Activated T-helper 2 cell treated with anti-CD3 and anti-CD28 coated beads, Interferon-gamma antibody, Interleukin-2, Interleukin-4, amounts not matched to agents 10 μg/mL and 5 μg/mL and 100 μg/mL, durations not matched to agents 14 hours and 24 hours and 36 hours (primary cell): ENCODE measurements at regions of chr22 and their contacts with region 1.

Region 1: DNA sequence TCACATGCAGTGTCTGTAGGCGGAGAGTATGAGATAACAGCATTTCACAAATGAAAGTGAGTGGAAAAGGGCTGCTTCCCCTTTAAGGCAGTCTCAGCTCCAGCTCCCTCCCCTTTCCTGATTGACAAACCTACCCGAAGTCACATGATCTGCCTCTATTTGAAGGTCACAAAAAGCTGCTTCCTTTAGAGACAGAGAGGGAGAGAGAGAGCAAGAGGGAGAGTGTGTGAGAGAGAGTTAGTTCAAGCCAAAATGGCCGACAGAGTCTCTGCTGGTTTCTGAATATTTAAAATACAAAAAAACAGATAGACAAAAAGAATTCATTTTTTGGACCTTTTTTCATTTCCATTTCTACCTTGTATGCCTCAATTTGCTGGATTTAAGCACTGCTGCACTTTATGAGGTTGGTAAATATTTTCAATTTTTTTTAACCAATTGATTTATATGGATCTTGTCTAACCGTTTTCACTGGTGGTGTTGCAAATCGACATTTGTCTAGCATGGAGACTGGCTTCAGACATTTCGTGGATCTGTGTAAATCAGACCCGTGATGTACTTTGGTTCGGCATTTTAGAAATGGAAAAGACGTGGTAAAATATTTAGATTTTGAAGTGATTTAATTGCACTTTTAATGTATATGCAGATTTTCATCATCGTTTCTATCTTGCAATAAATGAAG is at the start of gene TNRC6B:
- DNase-seq: peak; percentile 79
- H3K4me3 Mint-ChIP-seq: peak within 1 kb of the TSS; percentile 88
- H3K27ac Mint-ChIP-seq: peak within 1 kb of the TSS; percentile 89
- H3K4me1 Mint-ChIP-seq: peaks cover 52% of the 10 kb centered on the region
- H3K27me3 Mint-ChIP-seq: no peaks in the 10 kb centered on the region
- total RNA-seq, gene TNRC6B: 28.0 and 34.1 TPM in 2 replicates

Region 2: DNA sequence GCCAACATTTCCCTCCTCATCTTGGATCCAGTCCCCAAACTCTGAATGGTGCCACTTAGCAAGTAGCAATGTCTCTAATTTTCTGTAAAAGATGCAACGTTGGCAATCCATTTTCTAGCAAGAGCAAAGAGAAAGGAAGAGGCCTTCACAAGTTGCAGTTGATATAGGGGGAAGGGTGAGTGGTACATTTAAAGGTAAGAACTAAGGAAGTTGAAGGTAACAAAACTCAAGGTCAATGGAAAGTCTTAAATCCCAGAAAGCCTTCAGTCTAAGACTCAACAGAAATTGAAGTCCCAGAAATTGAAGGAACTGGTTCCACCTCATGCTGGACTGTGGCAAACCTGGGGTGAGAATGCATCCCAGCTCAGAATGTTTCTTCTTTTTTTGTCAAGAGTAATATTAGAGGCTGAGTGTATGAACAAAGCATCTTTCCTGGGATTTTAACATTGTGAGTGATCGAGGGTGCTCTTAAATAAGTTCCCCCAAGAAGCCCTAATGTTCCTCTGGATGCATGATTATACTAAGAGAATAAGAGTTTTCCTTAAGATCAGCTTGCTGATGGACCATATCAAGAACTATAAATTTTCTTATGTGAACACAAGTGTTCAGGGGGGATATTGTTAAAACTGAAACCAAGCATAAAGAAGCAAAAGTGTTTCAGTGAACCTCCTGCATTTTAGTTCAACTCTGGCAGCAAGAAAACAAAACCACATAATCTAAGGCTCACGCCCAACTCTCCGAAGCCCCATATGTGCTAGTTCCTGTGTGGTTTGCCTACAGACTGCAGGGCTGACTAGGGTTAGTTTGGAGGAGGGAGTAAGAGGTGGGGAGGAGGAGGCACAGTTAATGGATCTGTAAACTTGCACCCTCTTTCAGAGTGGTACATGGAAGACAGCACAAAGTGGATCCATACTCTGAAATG is 277.3 kb before region 1 on chr22 and contains the start of gene GRAP2:
- intact Hi-C with region 1: loop called (anchors 10 kb)
- DNase-seq: peak; percentile 78
- H3K4me3 Mint-ChIP-seq: peak within 1 kb of the TSS; percentile 98
- H3K27ac Mint-ChIP-seq: peak within 1 kb of the TSS; percentile 99
- H3K4me1 Mint-ChIP-seq: peaks cover 31% of the 10 kb centered on the region
- H3K27me3 Mint-ChIP-seq: no peaks in the 10 kb centered on the region
- total RNA-seq, gene GRAP2: 44.1 and 46.5 TPM in 2 replicates

Region 3: GRCh38 chr22:40055143-40055883 is 122.6 kb before region 1 on chr22:
- intact Hi-C with region 1: loop called (anchors 2 kb)
- DNase-seq: no peak
- H3K4me3 Mint-ChIP-seq: peak overlapping the region; percentile 68
- H3K27ac Mint-ChIP-seq: peak overlapping the region; percentile 92
- H3K4me1 Mint-ChIP-seq: peaks cover 65% of the 10 kb centered on the region
- H3K27me3 Mint-ChIP-seq: no peaks in the 10 kb centered on the region

Region 4: GRCh38 chr22:40196628-40197360 is 18.9 kb after region 1 on chr22:
- intact Hi-C with region 1: loop called (anchors 1 kb)
- DNase-seq: no peak
- H3K4me3 Mint-ChIP-seq: no peak overlapping the region
- H3K27ac Mint-ChIP-seq: peak overlapping the region; percentile 78
- H3K4me1 Mint-ChIP-seq: peaks cover 38% of the 10 kb centered on the region
- H3K27me3 Mint-ChIP-seq: no peaks in the 10 kb centered on the region

Region 5: DNA sequence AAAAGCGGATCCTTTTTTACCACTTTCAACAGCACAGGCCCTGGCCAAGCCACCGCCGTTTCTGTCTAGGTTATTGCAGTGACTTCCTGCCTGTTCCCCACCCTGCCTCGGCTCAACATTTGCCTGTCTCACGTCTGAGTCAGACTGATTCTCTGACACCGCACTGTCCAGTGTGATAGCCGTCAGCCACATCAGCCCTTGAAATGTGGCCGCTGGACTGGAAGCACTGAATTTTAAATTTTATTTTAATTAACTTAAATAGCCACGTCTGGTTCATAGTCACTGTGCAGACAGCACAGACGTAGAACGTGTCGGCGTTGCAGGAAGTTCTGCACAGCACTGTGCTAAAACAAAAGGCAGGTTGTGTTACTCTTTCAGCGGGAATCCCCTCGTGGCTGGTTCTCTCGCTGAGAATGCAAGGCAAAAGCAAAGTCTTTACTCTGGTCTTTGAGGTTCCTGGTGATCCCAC is 112.1 kb after region 1 on chr22:
- intact Hi-C with region 1: loop called (anchors 1 kb)
- DNase-seq: peak; percentile 60
- H3K4me3 Mint-ChIP-seq: peak overlapping the region; percentile 63
- H3K27ac Mint-ChIP-seq: peak overlapping the region; percentile 94
- H3K4me1 Mint-ChIP-seq: peaks cover 49% of the 10 kb centered on the region
- H3K27me3 Mint-ChIP-seq: no peaks in the 10 kb centered on the region

Region 6: DNA sequence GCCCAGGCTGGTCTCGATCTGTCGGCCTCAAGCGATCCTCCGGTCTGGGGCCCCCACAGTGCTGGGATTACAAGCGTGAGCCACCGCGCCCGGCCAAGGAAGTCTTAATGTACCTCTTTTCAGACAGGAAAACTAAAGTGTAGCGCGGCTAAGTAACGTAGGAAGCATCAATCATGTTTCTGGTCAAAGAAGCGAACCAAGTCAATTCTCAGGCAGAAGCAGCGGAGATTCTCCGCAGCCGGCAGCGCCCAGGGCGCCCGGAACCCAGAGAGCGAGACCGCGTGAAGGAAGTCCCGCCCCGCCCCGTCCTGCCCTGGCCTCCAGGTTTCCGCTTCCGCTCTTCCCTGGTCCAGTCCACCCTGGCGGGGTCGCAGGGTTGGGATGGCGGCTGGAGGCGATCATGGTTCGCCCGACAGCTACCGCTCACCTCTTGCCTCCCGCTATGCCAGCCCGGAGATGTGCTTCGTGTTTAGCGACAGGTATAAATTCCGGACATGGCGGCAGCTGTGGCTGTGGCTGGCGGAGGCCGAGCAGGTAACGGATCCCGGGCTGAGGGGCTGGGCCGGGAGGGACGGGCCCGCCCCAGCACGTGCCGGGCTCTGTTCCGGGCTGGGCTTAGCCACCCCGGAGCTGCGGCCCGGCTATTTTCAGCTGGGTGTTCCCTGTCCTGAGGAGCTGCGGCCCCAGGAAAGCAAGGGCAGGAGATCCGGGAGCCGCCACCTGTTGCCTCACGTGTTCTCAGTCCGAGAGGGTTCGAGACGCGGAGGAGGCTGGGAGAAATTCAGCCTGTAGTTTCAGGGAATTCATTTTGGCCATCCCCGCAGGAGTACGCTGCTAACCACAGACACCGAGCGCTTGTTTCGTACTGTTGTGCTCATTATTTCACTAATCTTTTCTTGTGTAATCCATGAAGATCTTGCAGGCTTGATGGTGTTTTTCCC is 168.6 kb after region 1 on chr22 and contains the start of gene ADSL:
- intact Hi-C with region 1: loop called (anchors 1 kb)
- DNase-seq: peak; percentile 83
- H3K4me3 Mint-ChIP-seq: peak within 1 kb of the TSS; percentile 96
- H3K27ac Mint-ChIP-seq: peak within 1 kb of the TSS; percentile 98
- H3K4me1 Mint-ChIP-seq: peaks cover 37% of the 10 kb centered on the region
- H3K27me3 Mint-ChIP-seq: no peaks in the 10 kb centered on the region
- total RNA-seq, gene ADSL: 142 and 160 TPM in 2 replicates

Region 7: GRCh38 chr22:40400159-40400558 is 222.3 kb after region 1 on chr22:
- intact Hi-C with region 1: no loop called
- DNase-seq: peak; percentile 61
- H3K4me3 Mint-ChIP-seq: no peak overlapping the region
- H3K27ac Mint-ChIP-seq: peak overlapping the region; percentile 28
- H3K4me1 Mint-ChIP-seq: peaks cover 56% of the 10 kb centered on the region
- H3K27me3 Mint-ChIP-seq: no peaks in the 10 kb centered on the region

Region 8: GRCh38 chr22:41285441-41285819 is 1107.6 kb after region 1 on chr22:
- intact Hi-C with region 1: no loop called
- DNase-seq: peak; percentile 82
- H3K4me3 Mint-ChIP-seq: peak overlapping the region; percentile 93
- H3K27ac Mint-ChIP-seq: peak overlapping the region; percentile 96
- H3K4me1 Mint-ChIP-seq: peaks cover 33% of the 10 kb centered on the region
- H3K27me3 Mint-ChIP-seq: no peaks in the 10 kb centered on the region